ENCODE measurements at regions of chr1 and their contacts with region 1.

Region 1: GRCh38 chr1:202135221-202135721 is 9.3 kb downstream of the ARL8A start:
- DNase-seq: no peak
- H3K4me3 ChIP-seq: no peak overlapping the region
- H3K27me3 ChIP-seq: no peaks in the 10 kb centered on the region
- CTCF ChIP-seq: peak; percentile 92

Region 2: GRCh38 chr1:202009326-202010179 is 125.7 kb before region 1 on chr1:
- CTCF ChIA-PET with region 1: interaction called, 642 read pairs
- POLR2A ChIA-PET with region 1: no interaction called
- DNase-seq: no peak
- H3K4me3 ChIP-seq: no peak overlapping the region
- H3K27me3 ChIP-seq: peaks cover 2% of the 10 kb centered on the region; the same call in 1 of the 2 replicates
- CTCF ChIP-seq: peak; percentile 89

Region 3: DNA sequence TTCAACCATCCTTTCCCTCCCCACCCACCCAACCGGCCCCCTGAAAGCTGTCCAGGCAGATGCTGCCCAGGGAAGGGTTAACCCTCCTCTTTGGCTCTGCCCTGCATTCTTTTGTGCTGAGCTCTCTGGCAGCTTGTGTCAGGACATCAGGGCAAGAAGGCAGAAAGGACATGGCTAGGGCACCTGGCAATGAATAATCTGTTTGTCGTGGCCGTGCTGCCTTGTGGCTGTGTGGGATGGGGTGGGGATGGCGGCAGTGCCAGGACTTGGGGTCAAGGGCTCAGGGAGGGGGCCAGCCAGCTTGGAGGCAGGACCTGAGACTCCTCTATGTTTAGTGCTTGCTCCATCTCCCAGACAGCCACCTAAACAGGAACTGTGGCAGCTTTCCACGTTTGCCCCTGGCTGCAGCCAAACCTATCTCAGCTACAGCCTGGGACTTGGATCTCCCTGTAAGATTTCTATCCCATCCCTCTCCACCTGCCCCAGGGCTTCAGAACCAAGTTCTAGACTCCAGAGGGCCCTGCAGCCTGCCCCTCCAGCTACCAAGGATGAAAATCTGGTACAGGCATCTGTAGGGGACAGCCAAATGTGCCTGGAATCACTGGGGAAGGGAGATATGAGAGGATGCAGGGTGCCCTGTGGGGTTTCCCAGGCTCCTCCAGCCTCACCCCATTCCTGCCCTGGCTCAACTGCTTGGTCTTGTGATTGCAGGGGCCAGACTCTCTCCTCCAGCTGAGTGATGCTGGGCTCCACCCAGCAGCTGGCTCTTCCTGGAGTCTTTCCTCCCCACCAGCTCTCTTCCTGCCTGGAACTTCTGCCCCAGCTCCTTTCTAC is 22.2 kb before region 1 on chr1:
- CTCF ChIA-PET with region 1: interaction called, 34 read pairs
- POLR2A ChIA-PET with region 1: no interaction called
- DNase-seq: no peak
- H3K4me3 ChIP-seq: no peak overlapping the region
- H3K27me3 ChIP-seq: peaks cover 4% of the 10 kb centered on the region
- CTCF ChIP-seq: no peak

Region 4: GRCh38 chr1:202452493-202452892 is 317.2 kb after region 1 on chr1:
- CTCF ChIA-PET with region 1: no interaction called
- POLR2A ChIA-PET with region 1: no interaction called
- DNase-seq: no peak
- H3K4me3 ChIP-seq: no peak overlapping the region
- H3K27me3 ChIP-seq: no peaks in the 10 kb centered on the region
- CTCF ChIP-seq: no peak

Region 5: DNA sequence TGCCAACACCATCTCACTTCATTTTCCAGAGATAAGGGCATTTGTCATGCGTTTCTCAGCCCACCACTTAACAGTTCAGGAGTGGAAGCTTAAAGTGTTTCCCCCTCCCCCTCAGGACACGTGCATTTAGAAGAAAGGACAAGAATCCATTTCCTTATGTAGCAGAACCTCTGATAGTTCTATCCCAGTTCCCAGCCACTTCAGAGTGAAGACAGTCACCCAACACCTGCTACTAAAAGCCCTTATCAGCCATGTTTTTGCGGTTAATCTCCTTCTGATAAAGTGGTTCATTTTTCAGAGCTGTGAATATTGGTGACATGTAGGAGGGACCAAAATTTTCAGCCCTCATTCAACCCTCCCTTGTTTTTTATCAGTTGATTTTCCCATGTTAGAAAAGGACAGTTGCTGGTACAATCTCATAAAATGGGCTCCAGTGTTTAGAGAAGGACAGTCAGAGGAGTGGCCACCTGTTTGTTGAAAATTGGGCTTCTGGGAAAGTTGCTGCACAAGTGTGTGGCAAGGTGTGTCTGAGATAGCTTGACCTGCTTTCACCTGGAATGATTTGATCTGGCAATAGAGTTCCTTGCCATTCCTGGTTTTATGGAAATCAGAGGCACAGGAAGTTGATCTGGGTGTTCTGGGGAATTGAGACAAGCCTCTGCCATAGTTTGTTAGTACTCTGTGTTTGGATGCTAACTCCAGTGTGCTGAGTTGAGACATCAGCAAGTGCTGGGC is 327.2 kb after region 1 on chr1:
- CTCF ChIA-PET with region 1: no interaction called
- POLR2A ChIA-PET with region 1: no interaction called
- DNase-seq: no peak
- H3K4me3 ChIP-seq: no peak overlapping the region
- H3K27me3 ChIP-seq: no peaks in the 10 kb centered on the region
- CTCF ChIP-seq: no peak